ENCODE measurements at regions of chr3 and their contacts with region 1.

Region 1: DNA sequence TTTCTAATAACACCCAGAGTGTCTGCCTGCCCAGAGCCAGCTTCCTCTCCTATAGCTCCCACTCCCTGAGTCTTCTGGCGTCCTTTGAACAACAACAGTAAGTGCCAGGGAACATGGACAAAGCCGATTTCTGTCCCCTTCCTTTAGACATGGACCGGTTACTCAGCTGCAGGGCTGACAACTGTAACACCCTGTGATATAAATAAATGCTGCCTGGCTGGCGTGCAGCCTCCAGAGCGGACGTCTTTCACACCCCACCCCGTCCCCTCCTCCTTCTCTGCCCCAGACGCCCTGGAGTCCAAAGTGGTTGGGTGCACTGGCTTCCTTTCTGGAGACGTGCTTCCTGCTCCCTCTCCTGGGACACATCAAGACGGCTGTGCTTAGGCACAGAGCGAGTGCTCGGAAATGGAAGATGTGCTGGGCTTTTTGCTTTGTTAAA is 281.9 kb upstream of the LRRFIP2 start:
- DNase-seq: peak; percentile 90
- ATAC-seq: peak; percentile 69 to 72

Region 2: DNA sequence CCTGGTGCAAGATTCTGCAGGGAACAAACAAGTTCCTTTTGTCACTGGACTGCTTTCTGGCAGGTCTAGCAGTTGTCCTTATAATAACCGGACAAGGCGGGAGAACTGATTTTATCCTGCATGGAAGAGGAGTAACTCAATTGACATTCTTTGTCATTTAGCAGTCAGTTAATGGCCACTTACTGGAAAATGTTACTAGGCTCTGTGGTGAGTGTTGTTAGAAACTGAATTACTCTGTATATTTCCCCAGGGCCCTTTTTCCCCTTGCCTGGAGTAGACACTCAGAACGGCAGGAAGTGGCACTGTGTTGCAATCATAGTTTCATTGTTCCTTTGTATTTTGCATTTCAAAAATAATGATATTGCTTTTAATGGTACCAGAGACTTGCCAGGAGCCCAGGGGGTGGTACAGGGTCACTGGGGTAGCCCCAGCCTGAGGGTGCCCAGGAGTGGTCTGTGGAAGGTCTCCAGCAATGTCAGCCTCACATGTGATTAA is 36.7 kb after region 1 on chr3:
- intact Hi-C with region 1: loop called in 1 of 2 experiments (anchors 5 kb)
- DNase-seq: peak; percentile 41
- ATAC-seq: peak; percentile 81 to 84

Region 3: GRCh38 chr3:37526511-37526910 is 70.2 kb after region 1 on chr3:
- intact Hi-C with region 1: loop called in 1 of 2 experiments (anchors 5 kb)
- DNase-seq: peak; percentile 86
- ATAC-seq: peak; percentile 92 to 95

Measured in left cardiac atrium (tissue), 4 donors.